Right cardiac atrium (tissue), 5 donors: ENCODE measurements at regions of chr4 and their contacts with region 1.

Region 1: GRCh38 chr4:124334119-124334518 is 378.4 kb downstream of the ANKRD50 start:
- DNase-seq: no peak
- ATAC-seq: peak; percentile 62 to 75
- H3K4me3 ChIP-seq: no peak overlapping the region
- H3K27ac ChIP-seq: no peak overlapping the region
- H3K4me1 ChIP-seq: no peaks in the 10 kb centered on the region
- H3K27me3 ChIP-seq: no peaks in the 10 kb centered on the region

Region 2: DNA sequence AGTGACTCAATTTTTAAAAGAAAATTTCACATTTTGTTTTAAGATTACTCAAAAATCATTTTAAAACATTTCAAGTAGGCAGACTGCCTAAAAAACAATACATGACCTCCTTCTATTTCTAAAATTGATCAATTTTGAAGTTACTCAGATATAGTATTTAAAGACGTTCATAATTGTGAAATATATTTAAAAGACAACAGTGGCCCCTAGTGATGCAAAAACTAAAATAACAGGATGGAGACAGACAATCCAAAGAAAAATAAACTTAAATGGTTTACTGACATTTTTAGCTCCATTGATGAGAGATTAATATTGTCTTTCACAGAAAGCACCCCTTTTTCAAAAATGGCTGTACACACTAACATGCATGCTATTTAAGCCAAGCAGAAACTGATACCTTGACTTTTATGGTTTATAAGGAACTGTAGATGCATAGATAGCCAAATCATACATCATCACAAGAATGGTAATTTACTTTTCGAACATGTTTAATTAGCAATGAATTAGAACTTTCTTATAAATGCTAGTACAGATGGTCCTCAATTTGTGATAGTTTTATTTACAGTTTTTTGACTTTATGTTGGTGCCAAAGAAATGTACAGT is 910.8 kb after region 1 on chr4:
- intact Hi-C with region 1: loop called (anchors 5 to 10 kb)
- DNase-seq: no peak
- ATAC-seq: no peak
- H3K4me3 ChIP-seq: no peak overlapping the region
- H3K27ac ChIP-seq: no peak overlapping the region
- H3K4me1 ChIP-seq: no peaks in the 10 kb centered on the region
- H3K27me3 ChIP-seq: no peaks in the 10 kb centered on the region

Region 3: GRCh38 chr4:125283707-125284279 is 949.7 kb after region 1 on chr4:
- intact Hi-C with region 1: loop called in 1 of 4 experiments (anchors 10 kb)
- DNase-seq: no peak
- ATAC-seq: no peak
- H3K4me3 ChIP-seq: no peak overlapping the region
- H3K27ac ChIP-seq: no peak overlapping the region
- H3K4me1 ChIP-seq: no peaks in the 10 kb centered on the region
- H3K27me3 ChIP-seq: no peaks in the 10 kb centered on the region